ENCODE measurements at regions of chr14 and their contacts with region 1.

Region 1: DNA sequence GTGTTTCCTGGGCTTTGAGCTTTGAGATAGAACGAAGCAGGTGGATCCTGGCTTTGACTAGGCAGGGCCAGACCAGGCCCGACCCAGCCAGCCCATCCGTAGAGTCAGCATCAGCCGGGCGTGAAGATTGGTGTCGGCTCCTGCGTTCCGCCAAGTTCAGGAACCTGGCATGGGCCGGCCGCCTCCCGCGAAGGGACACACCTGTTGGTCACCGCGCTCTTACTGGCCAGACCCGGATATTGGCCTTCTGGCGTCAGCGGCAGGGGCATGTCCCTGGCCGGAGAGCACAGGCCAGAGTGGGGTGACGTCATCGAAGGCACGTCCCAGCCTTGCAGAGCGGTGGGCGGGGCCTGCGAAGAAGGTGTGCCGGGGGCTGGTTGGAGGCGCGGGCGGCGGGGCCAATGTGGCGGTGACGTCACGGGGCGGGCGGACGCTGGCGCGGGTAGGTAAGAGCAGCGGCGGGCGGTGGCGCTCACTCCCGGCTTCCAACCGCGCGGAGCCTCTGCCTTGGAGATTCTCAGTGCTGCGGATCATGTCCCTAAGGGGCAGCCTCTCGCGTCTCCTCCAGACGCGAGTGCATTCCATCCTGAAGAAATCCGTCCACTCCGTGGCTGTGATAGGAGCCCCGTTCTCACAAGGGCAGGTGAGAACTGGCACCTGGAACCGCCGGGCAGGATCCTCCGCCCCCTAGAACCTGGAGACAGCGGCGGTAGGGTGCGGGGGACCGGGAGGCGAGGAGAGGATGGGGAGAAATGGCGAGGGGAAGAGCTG is at the start of gene ARG2:
- DNase-seq: peak; percentile 97 to 99
- H3K4me3 ChIP-seq: peak within 1 kb of the TSS; percentile 58 to 81
- H3K27ac ChIP-seq: peak within 1 kb of the TSS; percentile 83 to 84
- H3K4me1 ChIP-seq: peaks cover 4 to 22% of the 10 kb centered on the region in 2 donors
- H3K27me3 ChIP-seq: no peaks in the 10 kb centered on the region
- CTCF ChIP-seq: no peak
- total RNA-seq, gene ARG2: 10.1 TPM

Region 2: DNA sequence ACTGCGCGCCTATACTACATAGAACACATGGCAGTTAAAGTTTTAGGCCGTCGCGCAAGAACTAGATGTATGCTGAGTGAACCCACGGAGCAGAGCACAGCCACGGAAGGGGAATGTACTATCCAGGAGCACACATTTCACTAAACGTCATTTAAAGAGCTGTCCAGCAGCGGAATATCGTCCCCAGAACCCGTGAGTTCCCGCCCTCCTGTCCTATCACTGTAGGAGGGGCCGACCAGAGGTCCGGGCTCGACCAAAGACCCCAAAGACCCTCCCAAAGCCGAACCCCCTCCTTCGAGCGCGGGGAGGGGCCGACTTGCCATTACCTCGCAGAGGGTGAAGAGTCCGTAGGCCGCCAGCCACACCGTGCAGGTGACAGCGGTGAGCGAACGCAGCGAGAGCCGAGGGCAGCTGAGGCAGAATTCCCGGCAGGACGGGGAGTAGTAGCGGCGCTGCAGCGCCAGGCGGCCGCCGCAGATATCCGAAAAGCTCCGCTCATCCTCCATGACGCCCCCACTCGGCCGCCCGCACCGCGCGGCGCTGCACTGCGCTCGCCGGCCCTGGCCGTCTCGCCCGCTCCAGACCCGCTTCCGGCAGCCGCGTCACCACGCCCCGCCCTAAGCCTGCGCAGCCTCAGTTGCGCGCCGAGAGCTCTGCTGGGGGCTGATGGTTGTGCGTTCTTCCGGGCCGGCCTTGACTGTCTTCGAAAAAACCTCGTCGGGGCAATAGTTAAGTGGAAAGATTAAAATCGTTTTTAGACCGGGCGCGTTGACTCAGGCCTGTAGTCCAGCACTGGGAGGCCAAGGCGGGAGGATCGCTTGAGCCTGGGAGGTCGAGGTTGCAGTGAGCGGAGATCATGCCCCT is 19.7 kb before region 1 on chr14 and contains the start of gene PIGH:
- intact Hi-C with region 1: loop called (anchors 1 kb)
- DNase-seq: peak; percentile 56 to 95
- H3K4me3 ChIP-seq: peak within 1 kb of the TSS; percentile 84 to 90
- H3K27ac ChIP-seq: peak within 1 kb of the TSS; percentile 88 to 92
- H3K4me1 ChIP-seq: peaks cover 4 to 10% of the 10 kb centered on the region in 2 donors
- H3K27me3 ChIP-seq: no peaks in the 10 kb centered on the region
- CTCF ChIP-seq: peak; percentile 52 to 53 (median 52)
- total RNA-seq, gene PIGH: 20.9 TPM

Region 3: GRCh38 chr14:67666750-67667449 is 47.3 kb after region 1 on chr14:
- intact Hi-C with region 1: loop called (anchors 1 kb)
- DNase-seq: no peak
- H3K4me3 ChIP-seq: no peak overlapping the region
- H3K27ac ChIP-seq: no peak overlapping the region
- H3K4me1 ChIP-seq: peaks cover 0 to 6% of the 10 kb centered on the region in 2 donors
- H3K27me3 ChIP-seq: no peaks in the 10 kb centered on the region
- CTCF ChIP-seq: peak; percentile 43 to 59 (median 51)

Region 4: GRCh38 chr14:67674481-67675169 is 55.0 kb after region 1 on chr14 and contains the start of gene VTI1B:
- intact Hi-C with region 1: loop called (anchors 2 kb)
- DNase-seq: peak in 1 of 2 donors; percentile 84
- H3K4me3 ChIP-seq: peak within 1 kb of the TSS; percentile 86 to 97
- H3K27ac ChIP-seq: peak within 1 kb of the TSS; percentile 96 to 100
- H3K4me1 ChIP-seq: peaks cover 3 to 25% of the 10 kb centered on the region in 2 donors
- H3K27me3 ChIP-seq: no peaks in the 10 kb centered on the region
- CTCF ChIP-seq: peak in 1 of 3 experiments; percentile 8
- total RNA-seq, gene VTI1B: 43.2 TPM

Region 5: DNA sequence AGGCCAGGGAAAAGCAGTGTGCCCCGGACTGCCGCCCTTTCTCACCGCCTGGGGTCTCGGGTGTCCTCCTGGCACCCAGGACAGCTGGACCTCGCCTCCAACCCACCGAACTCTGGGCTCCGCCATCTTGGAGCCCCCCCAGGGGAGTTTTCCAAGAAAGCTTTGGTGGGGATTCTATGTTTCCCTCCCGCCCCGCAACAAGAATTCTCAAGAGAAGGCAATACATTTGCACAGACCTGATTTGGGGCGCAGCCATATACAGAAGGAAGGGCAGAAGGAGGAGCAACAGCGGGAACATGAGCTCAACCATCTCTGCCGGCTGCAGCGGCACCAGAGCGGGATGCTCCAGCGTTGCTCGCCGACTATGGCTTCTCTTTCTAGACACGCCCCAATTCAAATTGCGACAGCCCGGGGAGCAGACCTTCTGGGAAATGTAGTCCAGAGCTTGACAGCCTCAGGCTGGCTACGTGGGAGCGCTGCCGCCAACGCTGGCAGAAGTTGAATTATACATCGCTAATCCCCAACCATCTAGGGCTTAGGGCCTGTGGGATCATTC is 75.8 kb after region 1 on chr14 and contains the start of gene RDH11:
- intact Hi-C with region 1: loop called (anchors 2 kb)
- DNase-seq: peak; percentile 70 to 94
- H3K4me3 ChIP-seq: peak within 1 kb of the TSS; percentile 68 to 88
- H3K27ac ChIP-seq: peak within 1 kb of the TSS; percentile 74 to 84
- H3K4me1 ChIP-seq: peaks cover 0 to 5% of the 10 kb centered on the region in 2 donors
- H3K27me3 ChIP-seq: no peaks in the 10 kb centered on the region
- CTCF ChIP-seq: no peak
- total RNA-seq, gene RDH11: 25.1 TPM

Region 6: DNA sequence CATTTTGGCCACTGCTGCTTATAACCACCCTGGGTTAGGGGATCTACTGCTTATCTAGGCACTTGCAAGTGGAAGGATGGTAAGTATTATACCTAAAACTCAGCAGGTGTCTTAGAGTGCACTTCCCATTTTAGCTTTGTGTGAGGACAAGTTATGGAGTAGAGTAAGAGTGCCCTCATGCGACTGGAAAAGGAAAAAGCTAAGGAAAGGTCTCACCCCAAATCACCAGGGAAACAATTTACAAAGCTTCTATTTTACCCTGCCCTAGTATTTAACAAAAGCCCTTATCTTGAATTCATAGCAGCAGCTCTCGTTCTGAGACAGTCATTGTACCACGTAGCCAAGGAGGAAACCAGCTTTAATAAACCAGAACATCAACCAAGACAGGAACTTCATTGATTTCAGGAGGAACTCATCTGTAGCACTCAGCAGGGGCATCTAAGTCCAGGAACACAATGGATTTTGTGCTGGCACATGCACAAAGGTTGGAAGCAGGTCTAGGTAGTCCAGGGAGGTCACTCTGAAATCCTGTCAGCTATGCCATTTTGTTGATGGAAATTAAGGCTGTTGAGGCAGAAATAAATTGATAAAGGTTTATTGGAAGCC is 85.0 kb after region 1 on chr14:
- intact Hi-C with region 1: loop called (anchors 1 kb)
- DNase-seq: no peak
- H3K4me3 ChIP-seq: no peak overlapping the region
- H3K27ac ChIP-seq: no peak overlapping the region
- H3K4me1 ChIP-seq: no peaks in the 10 kb centered on the region
- H3K27me3 ChIP-seq: no peaks in the 10 kb centered on the region
- CTCF ChIP-seq: peak; percentile 63 to 79 (median 68)

Region 7: DNA sequence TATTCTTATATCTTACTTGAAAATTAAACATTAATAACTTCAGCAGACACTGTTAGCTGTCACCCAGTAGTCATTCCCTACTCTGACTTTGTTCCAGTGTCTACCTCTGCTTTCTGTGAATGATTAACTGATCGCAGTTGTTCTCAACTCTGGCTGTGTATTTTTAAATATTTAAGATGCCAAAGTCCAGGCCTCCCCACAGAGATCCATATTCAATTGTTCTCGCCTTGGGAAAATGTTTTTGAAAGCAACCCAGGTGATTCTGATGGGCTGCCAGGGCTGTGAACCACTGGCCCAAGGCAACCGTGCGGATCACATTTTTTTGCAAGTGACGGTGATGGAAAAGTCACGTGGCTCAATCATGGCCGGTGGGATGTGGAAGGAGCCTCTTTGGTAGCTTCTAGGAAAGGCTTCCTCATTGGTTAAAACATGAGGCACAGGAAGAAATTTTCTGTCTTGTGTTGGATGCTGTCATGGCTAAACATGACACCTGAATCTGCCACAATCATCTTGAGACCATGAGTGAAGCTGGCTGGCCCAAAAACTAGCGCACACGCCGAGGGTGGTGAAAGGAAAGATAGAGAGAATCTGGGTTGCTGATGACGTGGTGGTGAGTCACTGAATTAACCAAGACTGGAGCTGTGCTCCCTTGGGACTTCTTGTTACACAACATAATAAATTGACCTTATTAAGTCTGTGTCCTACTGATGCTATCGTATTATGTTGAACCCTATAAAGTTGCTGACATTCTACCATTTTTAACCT is 119.3 kb after region 1 on chr14:
- intact Hi-C with region 1: no loop called
- DNase-seq: peak; percentile 14 to 78
- H3K4me3 ChIP-seq: no peak overlapping the region
- H3K27ac ChIP-seq: no peak overlapping the region
- H3K4me1 ChIP-seq: no peaks in the 10 kb centered on the region
- H3K27me3 ChIP-seq: no peaks in the 10 kb centered on the region
- CTCF ChIP-seq: no peak

Region 8: DNA sequence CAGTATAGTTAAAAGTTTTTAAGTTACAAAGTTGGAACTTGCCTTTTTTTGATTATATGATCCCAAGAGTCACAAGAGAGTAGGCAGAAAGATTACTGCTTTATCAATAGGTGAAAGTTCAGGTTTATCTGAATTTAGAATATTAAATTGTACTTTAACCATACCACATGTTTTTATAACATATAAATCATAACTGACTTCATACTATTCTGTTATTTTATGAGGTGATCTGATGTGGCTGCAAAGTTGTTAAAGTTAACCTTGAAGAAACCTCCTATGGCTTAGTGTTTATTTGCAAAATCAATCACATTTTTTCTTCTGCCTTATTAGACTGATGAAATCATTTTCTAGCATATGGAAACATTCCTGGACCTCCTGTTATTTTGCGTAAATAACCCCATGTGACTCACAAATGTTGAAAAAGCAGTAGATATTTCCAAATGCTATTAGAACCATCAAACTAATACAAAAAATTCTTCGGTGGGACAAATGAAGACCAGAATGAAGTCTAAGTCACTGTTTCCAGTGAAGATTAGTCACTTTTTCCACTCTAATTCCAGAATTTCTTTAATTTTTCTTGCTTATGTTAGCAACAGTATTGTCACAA is 332.0 kb after region 1 on chr14:
- intact Hi-C with region 1: no loop called
- DNase-seq: no peak
- H3K4me3 ChIP-seq: no peak overlapping the region
- H3K27ac ChIP-seq: no peak overlapping the region
- H3K4me1 ChIP-seq: no peaks in the 10 kb centered on the region
- H3K27me3 ChIP-seq: no peaks in the 10 kb centered on the region
- CTCF ChIP-seq: no peak

Region 9: GRCh38 chr14:69611201-69612011 is 1991.8 kb after region 1 on chr14 and contains the start of gene SUSD6:
- intact Hi-C with region 1: loop called (anchors 10 kb)
- DNase-seq: peak; percentile 75 to 96
- H3K4me3 ChIP-seq: peak within 1 kb of the TSS; percentile 71 to 98
- H3K27ac ChIP-seq: peak within 1 kb of the TSS; percentile 97 to 99
- H3K4me1 ChIP-seq: peaks cover 17 to 36% of the 10 kb centered on the region in 2 donors
- H3K27me3 ChIP-seq: no peaks in the 10 kb centered on the region
- CTCF ChIP-seq: no peak
- total RNA-seq, gene SUSD6: 23.3 TPM

Measured in ascending aorta (tissue), 2 donors.